Heart right ventricle (tissue), 16 donors: ENCODE measurements at regions of chr21 and their contacts with region 1.

Region 1: GRCh38 chr21:18298228-18298627 is 53.6 kb downstream of the CHODL start:
- DNase-seq: no peak
- ATAC-seq: no peak
- H3K4me3 ChIP-seq: no peak overlapping the region
- H3K27ac ChIP-seq: no peak overlapping the region
- H3K4me1 ChIP-seq: no peaks in the 10 kb centered on the region
- H3K27me3 ChIP-seq: peaks cover 0 to 4% (median 0%) of the 10 kb centered on the region in 7 donors
- CTCF ChIP-seq: no peak

Region 2: DNA sequence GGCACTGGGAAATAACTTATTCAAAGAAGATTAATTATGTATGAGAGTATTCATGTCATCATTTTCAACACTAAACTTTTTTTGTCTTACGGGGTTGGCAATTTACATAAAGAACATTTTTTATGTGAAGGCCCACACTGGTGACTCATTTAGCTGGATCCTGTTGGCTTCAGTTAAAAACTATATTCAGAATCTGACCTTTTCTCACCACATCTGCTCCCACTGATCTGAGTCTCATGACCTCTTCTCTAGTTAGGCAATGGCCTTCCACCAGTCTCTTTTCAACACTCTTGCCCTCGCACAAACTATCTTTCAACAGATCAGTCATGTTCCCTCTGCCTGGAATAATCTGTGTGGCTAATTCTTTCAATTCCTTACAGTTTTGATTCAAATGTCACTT is 52.0 kb after region 1 on chr21:
- intact Hi-C with region 1: loop called in 1 of 10 experiments (anchors 10 kb)
- DNase-seq: no peak
- ATAC-seq: peak in 1 of 8 donors; percentile 65
- H3K4me3 ChIP-seq: no peak overlapping the region
- H3K27ac ChIP-seq: no peak overlapping the region
- H3K4me1 ChIP-seq: no peaks in the 10 kb centered on the region
- H3K27me3 ChIP-seq: no peaks in the 10 kb centered on the region
- CTCF ChIP-seq: no peak

Region 3: GRCh38 chr21:18369115-18369514 is 70.9 kb after region 1 on chr21:
- intact Hi-C with region 1: loop called in 1 of 10 experiments (anchors 10 kb)
- DNase-seq: no peak
- ATAC-seq: no peak
- H3K4me3 ChIP-seq: no peak overlapping the region
- H3K27ac ChIP-seq: no peak overlapping the region
- H3K4me1 ChIP-seq: no peaks in the 10 kb centered on the region
- H3K27me3 ChIP-seq: no peaks in the 10 kb centered on the region
- CTCF ChIP-seq: peak in 6 of 9 donors; percentile 25 to 46 (median 28)